ENCODE measurements at regions of chr10 and their contacts with region 1.

Region 1: GRCh38 chr10:63003816-63004453 is 129.2 kb upstream of the NRBF2 start:
- DNase-seq: no peak
- ATAC-seq: no peak

Region 2: DNA sequence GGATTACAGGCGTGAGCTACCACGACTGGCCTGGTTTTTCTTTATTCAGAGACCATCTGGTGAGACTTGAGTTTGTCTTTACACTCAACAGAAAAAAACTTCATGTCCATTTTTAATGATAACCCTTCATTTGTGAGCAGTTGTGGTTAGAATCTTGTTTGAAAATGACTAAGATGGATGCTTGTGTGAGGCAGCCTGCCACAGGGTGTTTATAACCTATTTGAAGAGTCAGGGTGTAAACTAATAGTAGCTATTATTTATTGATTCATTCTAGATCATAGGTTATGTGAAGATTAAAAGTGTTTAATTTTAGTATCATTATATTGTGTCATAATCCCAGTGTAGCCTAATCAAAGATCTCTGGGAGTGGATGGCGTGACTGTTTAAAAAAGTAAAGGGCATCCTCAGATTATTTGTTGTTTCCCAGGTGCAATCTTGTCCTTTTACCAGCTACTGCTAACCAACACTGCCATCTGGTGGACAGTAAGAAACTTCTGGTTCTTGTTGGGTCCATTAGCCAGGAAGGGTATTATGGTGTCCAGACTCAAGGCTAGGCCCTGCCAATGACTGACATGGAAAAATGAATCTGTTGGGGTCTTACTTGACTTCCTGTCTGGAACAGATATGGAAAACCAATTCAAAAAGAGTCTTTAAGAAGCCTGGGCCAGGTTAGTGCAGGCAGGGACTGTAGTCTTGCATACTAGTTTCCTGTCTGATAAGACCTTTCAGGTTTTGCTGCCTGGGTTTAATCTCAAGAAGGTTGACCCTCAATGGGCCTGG is 154.1 kb after region 1 on chr10:
- intact Hi-C with region 1: loop called (anchors 10 kb)
- DNase-seq: no peak
- ATAC-seq: peak; percentile 75